Naive thymus-derived CD4-positive, alpha-beta T cell (primary cell): ENCODE measurements at regions of chr1 and their contacts with region 1.

Region 1: GRCh38 chr1:42958488-42959319 is at the start of gene SLC2A1:
- DNase-seq: peak; percentile 84 to 95 (median 92)
- ATAC-seq: peak; percentile 96
- H3K4me3 ChIP-seq: peak within 1 kb of the TSS; percentile 96
- H3K4me3 Mint-ChIP-seq: peak within 1 kb of the TSS; percentile 95 to 99 (median 98)
- H3K27ac ChIP-seq: peak within 1 kb of the TSS; percentile 88
- H3K27ac Mint-ChIP-seq: peak within 1 kb of the TSS; percentile 94 to 99 (median 97)
- H3K4me1 ChIP-seq: peaks cover 34 to 40% of the 10 kb centered on the region in 2 donors
- H3K4me1 Mint-ChIP-seq: peaks cover 44 to 65% (median 56%) of the 10 kb centered on the region in 7 donors
- H3K27me3 ChIP-seq: no peaks in the 10 kb centered on the region
- H3K27me3 Mint-ChIP-seq: peaks cover 0 to 18% (median 0%) of the 10 kb centered on the region in 5 donors
- total RNA-seq, gene SLC2A1: 43.6 to 123 (median 73.1) TPM

Region 2: DNA sequence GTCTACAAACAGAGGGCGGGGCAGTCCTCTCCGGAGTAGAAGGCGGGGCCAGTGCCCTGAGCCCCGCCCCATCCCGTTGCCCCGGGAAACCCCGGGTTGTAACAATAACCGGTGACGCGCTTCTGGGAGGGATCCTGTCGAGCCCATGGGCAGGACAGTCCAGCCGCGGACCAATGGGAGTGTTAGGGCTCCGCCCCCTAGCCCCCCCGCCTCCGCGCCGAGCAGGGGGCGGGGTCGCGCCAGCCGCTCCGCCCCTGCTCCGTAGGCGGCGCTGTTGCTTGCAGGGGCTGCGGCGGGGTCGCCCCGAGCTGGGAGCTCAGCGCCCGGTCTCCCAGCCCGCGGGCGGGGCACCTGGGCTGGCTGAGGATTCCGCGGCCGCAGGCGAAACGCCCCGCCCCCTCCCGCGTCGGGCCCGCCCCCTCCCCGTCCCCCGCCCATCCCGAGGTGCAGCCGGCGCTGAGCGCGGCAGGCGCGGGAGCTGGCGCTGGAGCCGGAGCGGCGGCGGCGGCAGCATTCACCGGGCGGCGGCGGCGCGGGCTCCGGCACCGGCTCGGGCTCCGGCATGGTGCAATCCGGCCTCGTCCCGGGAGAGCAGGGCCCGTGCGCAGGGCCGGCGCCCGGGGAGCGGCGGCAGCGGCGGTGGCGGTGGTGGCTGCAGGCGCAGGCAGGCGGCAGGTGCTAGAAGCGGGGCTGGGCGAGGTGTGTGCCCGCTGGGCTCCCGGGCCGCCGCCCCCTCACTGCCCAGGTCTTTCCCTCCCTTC is 1597.5 kb before region 1 on chr1 and contains the start of gene FOXO6:
- CTCF ChIA-PET with region 1: no interaction called
- POLR2A ChIA-PET with region 1: no interaction called
- intact Hi-C with region 1: loop called in 1 of 2 experiments (anchors 10 kb)
- DNase-seq: peak; percentile 87 to 94 (median 91)
- ATAC-seq: peak; percentile 95
- H3K4me3 ChIP-seq: peak within 1 kb of the TSS; percentile 51
- H3K4me3 Mint-ChIP-seq: peak within 1 kb of the TSS; percentile 65 to 86 (median 80)
- H3K27ac ChIP-seq: peak within 1 kb of the TSS; percentile 25
- H3K27ac Mint-ChIP-seq: peak within 1 kb of the TSS in 7 of 9 donors; percentile 3 to 91 (median 73)
- H3K4me1 ChIP-seq: peaks cover 4 to 6% of the 10 kb centered on the region in 2 donors
- H3K4me1 Mint-ChIP-seq: peaks cover 4 to 28% (median 9%) of the 10 kb centered on the region in 7 donors
- H3K27me3 ChIP-seq: peaks cover 5 to 7% of the 10 kb centered on the region in 2 donors
- H3K27me3 Mint-ChIP-seq: peaks cover 10 to 58% (median 35%) of the 10 kb centered on the region in 5 donors
- total RNA-seq, gene FOXO6: 0.66 to 1.3 TPM in 2 of 5 experiments, not detected in the others

Region 3: GRCh38 chr1:42462828-42463763 is 495.6 kb before region 1 on chr1 and contains the start of gene CCDC30:
- CTCF ChIA-PET with region 1: no interaction called
- POLR2A ChIA-PET with region 1: no interaction called
- intact Hi-C with region 1: loop called in 1 of 2 experiments (anchors 5 kb)
- DNase-seq: peak; percentile 75 to 99 (median 98)
- ATAC-seq: peak; percentile 99
- H3K4me3 ChIP-seq: peak within 1 kb of the TSS; percentile 50
- H3K4me3 Mint-ChIP-seq: peak within 1 kb of the TSS; percentile 74 to 92 (median 86)
- H3K27ac ChIP-seq: peak within 1 kb of the TSS; percentile 86
- H3K27ac Mint-ChIP-seq: peak within 1 kb of the TSS; percentile 87 to 98 (median 93)
- H3K4me1 ChIP-seq: peaks cover 14 to 18% of the 10 kb centered on the region in 2 donors
- H3K4me1 Mint-ChIP-seq: peaks cover 14 to 57% (median 49%) of the 10 kb centered on the region in 7 donors
- H3K27me3 ChIP-seq: no peaks in the 10 kb centered on the region
- H3K27me3 Mint-ChIP-seq: peaks cover 0 to 20% (median 0%) of the 10 kb centered on the region in 5 donors
- total RNA-seq, gene CCDC30: 2.3 to 5.3 (median 4.2) TPM

Region 4: DNA sequence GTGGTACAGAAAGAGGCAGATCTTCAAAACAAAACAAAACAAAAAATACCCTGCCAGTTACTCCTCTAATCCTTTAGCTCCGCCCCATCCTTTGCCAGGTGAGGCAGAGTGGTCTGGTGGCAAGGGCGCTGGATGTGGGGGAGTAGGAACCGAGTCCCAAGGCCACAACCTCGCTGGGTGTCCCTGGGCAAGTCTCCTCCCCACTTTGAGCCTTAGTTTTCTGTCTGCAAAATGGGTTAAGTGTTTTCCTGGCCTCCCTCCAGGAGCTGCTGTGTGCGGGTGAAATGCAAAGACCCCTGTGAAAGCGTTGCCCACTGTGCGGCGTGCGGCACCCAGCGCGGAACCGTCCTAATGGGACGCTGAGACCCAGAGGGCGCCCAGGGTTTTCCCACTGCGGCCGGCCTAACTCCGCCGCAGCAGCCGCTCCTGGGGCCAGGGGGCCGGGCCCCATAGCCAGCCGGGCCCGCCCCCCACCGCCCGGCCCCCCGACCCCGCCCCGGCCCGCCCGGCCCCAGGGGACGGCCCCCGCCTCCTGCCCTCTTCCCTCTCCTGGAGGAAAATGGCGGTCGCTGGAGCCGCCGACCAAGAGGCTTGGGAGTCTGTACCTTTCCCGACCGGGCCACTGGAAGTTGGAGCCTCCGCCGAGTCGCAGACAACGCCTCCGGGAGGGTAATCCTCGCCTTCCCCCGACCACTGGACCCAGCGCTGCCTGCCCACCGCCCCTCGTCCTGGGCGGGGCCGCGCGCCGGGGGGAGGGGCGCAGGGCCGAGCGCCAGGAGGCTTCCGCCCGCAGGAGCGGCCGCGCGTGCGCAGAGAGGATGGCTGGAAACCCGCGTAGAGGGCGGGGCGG is 141.9 kb before region 1 on chr1 and contains the starts of genes ERMAP and SVBP:
- CTCF ChIA-PET with region 1: no interaction called
- POLR2A ChIA-PET with region 1: interaction called, 3 read pairs
- intact Hi-C with region 1: loop called (anchors 1 to 2 kb)
- DNase-seq: peak; percentile 86 to 98 (median 91)
- ATAC-seq: peak; percentile 97
- H3K4me3 ChIP-seq: peak within 1 kb of the TSS; percentile 69
- H3K4me3 Mint-ChIP-seq: peak within 1 kb of the TSS; percentile 76 to 90 (median 84)
- H3K27ac ChIP-seq: peak within 1 kb of the TSS; percentile 89
- H3K27ac Mint-ChIP-seq: peak within 1 kb of the TSS; percentile 64 to 94 (median 86)
- H3K4me1 ChIP-seq: peaks cover 6 to 10% of the 10 kb centered on the region in 2 donors
- H3K4me1 Mint-ChIP-seq: peaks cover 19 to 35% (median 29%) of the 10 kb centered on the region in 7 donors
- H3K27me3 ChIP-seq: no peaks in the 10 kb centered on the region
- H3K27me3 Mint-ChIP-seq: peaks cover 0 to 10% (median 0%) of the 10 kb centered on the region in 5 donors
- total RNA-seq, gene ERMAP: 6.1 to 10.3 (median 6.7) TPM
- total RNA-seq, gene SVBP: 12.7 to 22.2 (median 17.8) TPM

Region 5: DNA sequence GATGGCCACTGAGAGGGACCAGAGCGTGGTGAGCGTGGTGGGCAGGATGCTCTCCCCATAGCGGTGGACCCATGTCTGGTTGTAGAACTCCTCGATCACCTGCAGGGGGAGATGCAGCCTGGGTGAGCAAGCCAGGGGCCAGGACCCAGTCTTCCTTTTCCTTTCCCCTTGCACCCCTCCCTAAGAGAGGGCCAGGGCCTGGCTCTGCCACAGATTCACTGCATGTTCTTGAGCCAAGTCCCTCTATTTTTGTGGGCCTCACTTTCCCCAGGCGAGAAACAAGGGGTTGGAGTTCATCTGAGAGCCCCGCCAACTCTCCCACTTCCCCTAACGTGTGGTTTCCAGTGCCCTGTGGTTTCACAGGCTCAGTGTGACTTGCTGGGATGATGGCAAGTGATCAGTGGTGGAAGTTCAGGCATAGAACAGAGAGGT is 27.6 kb before region 1 on chr1:
- CTCF ChIA-PET with region 1: interaction called, 5 read pairs
- POLR2A ChIA-PET with region 1: interaction called, 134 read pairs
- intact Hi-C with region 1: loop called (anchors 1 kb)
- DNase-seq: peak; percentile 36 to 70 (median 58)
- ATAC-seq: peak; percentile 60
- H3K4me3 ChIP-seq: peak overlapping the region; percentile 41
- H3K4me3 Mint-ChIP-seq: peak overlapping the region; percentile 66 to 89 (median 80)
- H3K27ac ChIP-seq: peak overlapping the region; percentile 81
- H3K27ac Mint-ChIP-seq: peak overlapping the region; percentile 87 to 98 (median 93)
- H3K4me1 ChIP-seq: peaks cover 60 to 65% of the 10 kb centered on the region in 2 donors
- H3K4me1 Mint-ChIP-seq: peaks cover 43 to 81% (median 72%) of the 10 kb centered on the region in 7 donors
- H3K27me3 ChIP-seq: no peaks in the 10 kb centered on the region
- H3K27me3 Mint-ChIP-seq: no peaks in the 10 kb centered on the region

Region 6: DNA sequence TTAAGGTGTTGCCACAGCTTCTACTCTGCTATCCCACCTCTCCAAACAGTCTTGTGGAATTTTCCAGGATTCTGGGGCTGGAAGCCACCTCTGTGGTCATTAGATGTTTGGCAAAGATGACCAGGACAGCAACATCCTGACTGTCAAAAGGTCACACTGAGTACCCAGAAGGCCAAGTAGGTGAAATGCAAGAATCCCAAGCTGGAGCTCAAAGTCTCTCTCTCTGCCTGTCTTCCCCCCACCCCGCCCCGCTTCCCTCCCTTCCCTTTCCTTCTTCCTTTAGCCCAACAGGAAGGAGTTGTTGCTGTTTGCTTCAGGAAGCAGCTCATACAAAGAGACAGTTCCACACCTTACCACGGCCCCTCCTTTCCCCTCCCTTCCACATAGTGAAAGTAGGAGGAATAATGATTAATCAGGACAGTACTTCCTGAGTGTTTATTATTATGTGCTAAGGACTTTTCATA is 75.5 kb after region 1 on chr1:
- CTCF ChIA-PET with region 1: no interaction called
- POLR2A ChIA-PET with region 1: no interaction called
- intact Hi-C with region 1: loop called in 1 of 2 experiments (anchors 5 kb)
- DNase-seq: no peak
- ATAC-seq: peak; percentile 20
- H3K4me3 ChIP-seq: no peak overlapping the region
- H3K4me3 Mint-ChIP-seq: peak overlapping the region; percentile 31 to 82 (median 68)
- H3K27ac ChIP-seq: peak overlapping the region; percentile 54
- H3K27ac Mint-ChIP-seq: peak overlapping the region; percentile 81 to 95 (median 92)
- H3K4me1 ChIP-seq: peaks cover 17 to 21% of the 10 kb centered on the region in 2 donors
- H3K4me1 Mint-ChIP-seq: peaks cover 10 to 30% (median 21%) of the 10 kb centered on the region in 7 donors
- H3K27me3 ChIP-seq: no peaks in the 10 kb centered on the region
- H3K27me3 Mint-ChIP-seq: peaks cover 0 to 5% (median 0%) of the 10 kb centered on the region in 5 donors

Region 7: GRCh38 chr1:43104027-43104763 is 145.5 kb after region 1 on chr1:
- CTCF ChIA-PET with region 1: no interaction called
- POLR2A ChIA-PET with region 1: no interaction called
- intact Hi-C with region 1: no loop called
- DNase-seq: no peak
- ATAC-seq: no peak
- H3K4me3 ChIP-seq: no peak overlapping the region
- H3K4me3 Mint-ChIP-seq: no peak overlapping the region
- H3K27ac ChIP-seq: no peak overlapping the region
- H3K27ac Mint-ChIP-seq: no peak overlapping the region
- H3K4me1 ChIP-seq: no peaks in the 10 kb centered on the region
- H3K4me1 Mint-ChIP-seq: no peaks in the 10 kb centered on the region
- H3K27me3 ChIP-seq: no peaks in the 10 kb centered on the region
- H3K27me3 Mint-ChIP-seq: peaks cover 0 to 17% (median 9%) of the 10 kb centered on the region in 5 donors